H1 (cell line): ENCODE measurements at regions of chr14 and their contacts with region 1.

Region 1: DNA sequence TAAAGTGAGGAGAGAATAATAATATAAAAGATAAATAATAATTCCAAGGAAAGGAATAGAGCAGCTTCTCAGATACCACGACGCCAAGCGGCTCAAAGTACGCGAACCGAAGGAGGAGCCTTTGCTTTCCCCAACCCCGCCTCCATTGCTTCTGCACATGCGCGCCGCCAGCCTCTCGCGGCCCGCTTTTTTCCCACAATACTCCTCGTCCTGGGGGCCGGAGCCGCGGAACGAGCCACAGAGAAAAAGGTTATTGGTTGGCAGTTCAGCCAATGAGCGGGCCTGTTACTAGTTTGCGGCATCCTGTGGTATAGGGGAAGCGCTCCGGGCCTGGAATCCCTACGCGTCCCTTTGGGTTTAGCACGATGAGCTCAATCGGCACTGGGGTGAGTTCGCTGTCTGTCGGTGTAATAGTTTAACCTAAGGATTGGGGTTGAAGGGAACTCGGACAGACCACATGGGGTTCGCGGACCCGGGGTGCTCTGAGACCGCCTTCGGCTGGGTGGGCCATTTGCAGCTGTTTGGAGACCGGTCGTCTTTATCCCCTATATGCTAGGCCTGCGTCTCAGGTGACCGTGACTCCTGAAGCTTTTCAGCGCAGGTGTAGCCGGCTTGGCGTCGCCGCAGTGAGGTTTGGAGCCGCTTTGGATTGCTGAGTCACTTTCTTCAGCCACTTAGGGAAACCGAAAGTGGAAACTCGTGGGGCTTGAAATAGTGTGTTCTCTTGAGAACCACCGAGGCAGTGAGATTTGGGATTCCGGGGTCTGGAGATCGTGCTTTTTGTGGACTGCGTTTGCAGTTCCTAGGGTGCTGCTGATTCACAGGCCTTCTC is at the start of gene PSMA3:
- DNase-seq: peak; percentile 88 to 96
- H3K4me3 ChIP-seq: peak within 1 kb of the TSS; percentile 84 to 97 (median 88)
- H3K27ac ChIP-seq: peak within 1 kb of the TSS; percentile 92
- H3K4me1 ChIP-seq: peaks cover 0 to 5% (median 0%) of the 10 kb centered on the region in 4 experiments; a peak in 1 of 7 replicates
- H3K27me3 ChIP-seq: no peaks in the 10 kb centered on the region
- CTCF ChIP-seq: no peak
- EP300 ChIP-seq: no peak
- POLR2A ChIP-seq: peak; percentile 94 to 98
- RAD21 ChIP-seq: no peak
- total RNA-seq, gene PSMA3: 283 and 285 TPM in 2 replicates

Region 2: DNA sequence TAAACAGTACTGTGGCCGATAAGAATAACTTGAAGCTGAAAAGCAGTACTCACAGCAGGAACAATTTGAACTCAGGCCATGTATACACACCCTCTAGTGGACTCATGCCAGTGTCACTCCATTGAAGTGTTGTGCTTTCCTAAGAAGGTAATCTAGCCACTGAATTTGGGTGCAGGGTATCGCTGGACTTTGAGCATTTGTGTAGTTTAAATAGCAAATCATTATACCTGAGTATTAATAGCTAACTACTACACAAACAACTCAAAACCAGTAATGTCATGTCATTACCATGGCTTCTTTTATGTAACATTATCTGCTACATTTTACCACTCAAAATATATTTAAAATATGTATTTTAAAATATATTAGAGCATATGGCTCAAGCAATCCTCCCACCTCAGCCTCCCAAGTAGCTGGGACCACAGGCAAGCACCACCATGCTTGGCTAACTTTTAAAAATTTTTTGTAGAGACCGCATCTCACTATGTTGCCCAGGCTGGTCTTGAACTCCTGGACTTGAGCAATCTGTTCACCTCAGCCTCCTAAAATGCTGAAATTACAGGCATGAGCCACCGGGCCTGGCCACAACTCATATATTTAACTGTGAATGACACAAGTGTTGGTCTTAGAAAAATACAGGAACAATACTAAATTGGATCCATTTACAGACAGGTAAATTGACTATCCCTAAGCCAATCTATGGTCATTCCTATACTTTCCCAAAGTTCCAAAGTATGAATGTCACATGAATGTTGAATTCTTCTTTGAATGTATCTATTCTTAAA is 28.0 kb after region 1 on chr14:
- CTCF ChIA-PET with region 1: no interaction called
- POLR2A ChIA-PET with region 1: interaction called, 12 read pairs
- DNase-seq: no peak
- H3K4me3 ChIP-seq: no peak overlapping the region
- H3K27ac ChIP-seq: no peak overlapping the region
- H3K4me1 ChIP-seq: no peaks in the 10 kb centered on the region
- H3K27me3 ChIP-seq: no peaks in the 10 kb centered on the region
- CTCF ChIP-seq: peak in 1 of 3 experiments; percentile 37; a peak in 1 of 4 replicates
- EP300 ChIP-seq: no peak
- POLR2A ChIP-seq: no peak
- RAD21 ChIP-seq: no peak